ENCODE measurements at regions of chr1 and their contacts with region 1.

Region 1: GRCh38 chr1:167268398-167268787 is 47.7 kb downstream of the POU2F1 start:
- DNase-seq: no peak
- ATAC-seq: no peak
- H3K4me3 Mint-ChIP-seq: peak overlapping the region; percentile 12; the same call in 1 of the 2 replicates
- H3K27ac Mint-ChIP-seq: peak overlapping the region; percentile 71
- H3K4me1 Mint-ChIP-seq: peaks cover 51% of the 10 kb centered on the region
- H3K27me3 Mint-ChIP-seq: no peaks in the 10 kb centered on the region
- CTCF ChIP-seq: no peak

Region 2: GRCh38 chr1:167291539-167292185 is 23.3 kb after region 1 on chr1:
- CTCF ChIA-PET with region 1: interaction called, 14 read pairs
- POLR2A ChIA-PET with region 1: no interaction called
- DNase-seq: no peak
- ATAC-seq: no peak
- H3K4me3 Mint-ChIP-seq: no peak overlapping the region
- H3K27ac Mint-ChIP-seq: peak overlapping the region; percentile 84; the same call in 1 of the 2 replicates
- H3K4me1 Mint-ChIP-seq: peaks cover 39% of the 10 kb centered on the region
- H3K27me3 Mint-ChIP-seq: no peaks in the 10 kb centered on the region
- CTCF ChIP-seq: no peak

Region 3: DNA sequence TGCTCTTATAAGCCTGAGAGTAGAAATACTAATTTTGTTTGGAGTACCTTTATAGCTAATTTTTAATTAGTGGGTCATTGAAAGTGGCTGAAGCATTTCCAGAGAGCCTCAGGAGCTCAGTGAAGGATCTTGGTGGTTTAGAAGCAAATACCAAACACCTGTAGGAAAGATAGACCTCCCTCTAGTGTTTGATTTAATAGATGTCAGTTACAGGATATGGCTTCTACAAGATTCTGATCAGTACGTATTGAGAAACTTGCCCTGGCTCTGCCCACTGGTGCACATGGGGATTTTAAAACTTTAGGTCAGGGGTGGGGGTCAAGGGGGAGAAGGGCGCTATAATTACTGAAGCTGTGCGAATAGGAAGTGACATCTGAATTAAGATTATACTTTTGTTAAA is 74.5 kb after region 1 on chr1:
- CTCF ChIA-PET with region 1: interaction called, 16 read pairs
- POLR2A ChIA-PET with region 1: no interaction called
- DNase-seq: no peak
- ATAC-seq: peak; percentile 77
- H3K4me3 Mint-ChIP-seq: no peak overlapping the region
- H3K27ac Mint-ChIP-seq: no peak overlapping the region
- H3K4me1 Mint-ChIP-seq: peaks cover 27% of the 10 kb centered on the region
- H3K27me3 Mint-ChIP-seq: no peaks in the 10 kb centered on the region
- CTCF ChIP-seq: no peak

Region 4: GRCh38 chr1:167373398-167373797 is 105.0 kb after region 1 on chr1:
- CTCF ChIA-PET with region 1: interaction called, 11 read pairs
- POLR2A ChIA-PET with region 1: no interaction called
- DNase-seq: no peak
- ATAC-seq: peak; percentile 49
- H3K4me3 Mint-ChIP-seq: no peak overlapping the region
- H3K27ac Mint-ChIP-seq: peak overlapping the region; percentile 20
- H3K4me1 Mint-ChIP-seq: peaks cover 42% of the 10 kb centered on the region
- H3K27me3 Mint-ChIP-seq: no peaks in the 10 kb centered on the region
- CTCF ChIP-seq: no peak

Measured in WTC11 (cell line).